ENCODE measurements at regions of chr16 and their contacts with region 1.

Region 1: DNA sequence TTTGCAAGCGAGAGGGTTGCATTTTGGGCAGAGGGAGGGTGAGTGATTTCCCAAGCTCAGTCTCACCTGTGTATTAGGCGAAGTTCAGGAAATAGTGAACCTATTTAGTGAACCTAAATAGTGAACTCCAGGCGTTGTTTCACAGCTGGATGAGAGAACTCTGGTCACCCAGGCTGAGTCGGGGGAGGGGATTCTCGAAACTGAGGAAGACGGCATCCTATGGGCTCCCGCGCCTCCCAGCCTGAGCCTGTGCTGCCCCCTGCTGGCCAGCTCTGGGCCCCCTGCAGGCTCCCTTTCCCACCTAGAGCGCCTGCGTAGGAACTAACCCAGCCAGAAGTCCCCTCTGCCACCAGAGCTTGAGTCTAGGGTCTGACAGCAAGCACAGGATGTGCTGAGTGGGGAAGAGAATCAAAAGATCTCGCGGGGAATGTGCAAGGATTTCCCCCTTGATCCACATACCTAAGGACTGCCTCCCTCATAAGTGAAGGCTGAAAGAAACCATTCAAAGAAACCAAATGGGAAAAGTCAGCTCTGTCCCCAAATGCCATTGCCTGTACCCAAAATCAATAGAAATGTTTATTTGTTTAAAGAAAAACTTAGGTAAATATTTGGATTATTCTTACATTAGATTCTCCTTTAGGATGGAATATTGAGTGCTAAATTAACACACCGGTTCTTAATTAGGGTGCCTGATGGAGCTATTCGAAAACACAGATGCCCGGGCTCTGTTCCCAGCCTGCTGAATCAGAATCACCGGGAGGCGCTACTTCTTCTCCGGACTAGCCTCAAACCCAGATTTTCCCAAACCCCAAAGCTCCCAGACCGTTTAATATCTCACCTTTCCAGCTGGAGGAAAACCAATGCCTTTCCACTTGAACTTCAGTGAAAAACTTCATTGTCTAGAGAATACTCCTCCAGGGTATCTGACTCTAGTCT is 14.8 kb upstream of the MARVELD3 start:
- DNase-seq: peak; percentile 72
- ATAC-seq: peak; percentile 96
- H3K4me3 ChIP-seq: peak overlapping the region in 1 of 3 experiments; percentile 23; a peak in 2 of 6 replicates
- H3K27ac ChIP-seq: no peak overlapping the region
- H3K4me1 ChIP-seq: peaks cover 70% of the 10 kb centered on the region
- H3K27me3 ChIP-seq: no peaks in the 10 kb centered on the region
- CTCF ChIP-seq: peak; percentile 100
- EP300 ChIP-seq: no peak
- POLR2A ChIP-seq: no peak
- RAD21 ChIP-seq: peak; percentile 100

Region 2: GRCh38 chr16:71383054-71383773 is 228.0 kb before region 1 on chr16:
- CTCF ChIA-PET with region 1: no interaction called
- POLR2A ChIA-PET with region 1: no interaction called
- in situ Hi-C with region 1: no loop called
- intact Hi-C with region 1: no loop called
- DNase-seq: no peak
- ATAC-seq: peak; percentile 53
- H3K4me3 ChIP-seq: no peak overlapping the region
- H3K27ac ChIP-seq: no peak overlapping the region
- H3K4me1 ChIP-seq: no peaks in the 10 kb centered on the region
- H3K27me3 ChIP-seq: peaks cover 0 to 44% of the 10 kb centered on the region in 2 experiments; a peak in 3 of 5 replicates
- CTCF ChIP-seq: no peak
- EP300 ChIP-seq: no peak
- POLR2A ChIP-seq: no peak
- RAD21 ChIP-seq: no peak

Region 3: GRCh38 chr16:71461686-71462648 is 149.2 kb before region 1 on chr16 and contains the start of gene ZNF23:
- CTCF ChIA-PET with region 1: no interaction called
- POLR2A ChIA-PET with region 1: interaction called, 12 read pairs
- in situ Hi-C with region 1: no loop called
- intact Hi-C with region 1: no loop called
- DNase-seq: peak; percentile 64
- ATAC-seq: peak; percentile 99
- H3K4me3 ChIP-seq: peak within 1 kb of the TSS; percentile 73 to 90 (median 89)
- H3K27ac ChIP-seq: peak within 1 kb of the TSS; percentile 64
- H3K4me1 ChIP-seq: peaks cover 25% of the 10 kb centered on the region
- H3K27me3 ChIP-seq: no peaks in the 10 kb centered on the region; a peak in 1 of 5 replicates
- CTCF ChIP-seq: peak; percentile 57
- EP300 ChIP-seq: 0 out of 4 replicates have a peak, but pooled peaks have one; percentile 24 to 56
- POLR2A ChIP-seq: peak; percentile 96 to 99
- RAD21 ChIP-seq: peak; percentile 71
- total RNA-seq, gene ZNF23: 12.2 and 14.0 TPM in 2 replicates

Region 4: GRCh38 chr16:71499775-71500364 is 111.3 kb before region 1 on chr16:
- CTCF ChIA-PET with region 1: interaction called, 10 read pairs
- POLR2A ChIA-PET with region 1: no interaction called
- in situ Hi-C with region 1: no loop called
- intact Hi-C with region 1: no loop called
- DNase-seq: peak; percentile 68
- ATAC-seq: peak; percentile 85
- H3K4me3 ChIP-seq: no peak overlapping the region
- H3K27ac ChIP-seq: no peak overlapping the region
- H3K4me1 ChIP-seq: no peaks in the 10 kb centered on the region
- H3K27me3 ChIP-seq: no peaks in the 10 kb centered on the region
- CTCF ChIP-seq: peak; percentile 90
- EP300 ChIP-seq: no peak
- POLR2A ChIP-seq: no peak
- RAD21 ChIP-seq: peak; percentile 84

Region 5: GRCh38 chr16:71564155-71564967 is 46.8 kb before region 1 on chr16:
- CTCF ChIA-PET with region 1: interaction called, 89 read pairs
- POLR2A ChIA-PET with region 1: interaction called, 142 read pairs
- in situ Hi-C with region 1: loop called (anchors 5 kb)
- intact Hi-C with region 1: loop called (anchors 1 kb)
- DNase-seq: no peak
- ATAC-seq: peak; percentile 26
- H3K4me3 ChIP-seq: peak overlapping the region; percentile 54 to 76 (median 69)
- H3K27ac ChIP-seq: peak overlapping the region; percentile 85
- H3K4me1 ChIP-seq: peaks cover 37% of the 10 kb centered on the region
- H3K27me3 ChIP-seq: no peaks in the 10 kb centered on the region; a peak in 1 of 5 replicates
- CTCF ChIP-seq: no peak
- EP300 ChIP-seq: no peak
- POLR2A ChIP-seq: no peak
- RAD21 ChIP-seq: no peak

Region 6: DNA sequence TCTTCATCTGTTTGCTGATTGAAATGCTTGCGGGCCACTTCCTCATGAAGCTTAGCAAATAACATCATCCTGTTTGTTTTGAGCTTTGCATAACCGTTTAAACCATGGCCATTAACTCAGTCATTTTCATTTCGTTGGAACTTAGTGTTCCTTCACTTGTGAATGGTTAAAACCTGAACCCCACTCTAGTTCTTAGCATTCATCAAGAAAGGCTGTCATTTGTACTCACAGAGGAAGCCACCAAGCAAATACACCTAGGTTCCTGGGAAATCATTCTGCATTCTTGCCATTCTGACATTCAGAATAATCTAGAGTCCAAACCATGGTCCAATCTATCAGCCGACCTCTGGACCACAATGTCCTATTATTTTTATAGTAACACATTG is 25.9 kb before region 1 on chr16:
- CTCF ChIA-PET with region 1: no interaction called
- POLR2A ChIA-PET with region 1: interaction called, 17 read pairs
- in situ Hi-C with region 1: no loop called
- intact Hi-C with region 1: no loop called
- DNase-seq: peak; percentile 83
- ATAC-seq: peak; percentile 58
- H3K4me3 ChIP-seq: peak overlapping the region in 2 of 3 experiments; percentile 25 to 35; a peak in 2 of 6 replicates
- H3K27ac ChIP-seq: peak overlapping the region; percentile 90
- H3K4me1 ChIP-seq: peaks cover 77% of the 10 kb centered on the region
- H3K27me3 ChIP-seq: no peaks in the 10 kb centered on the region
- CTCF ChIP-seq: no peak
- EP300 ChIP-seq: peak in 1 of 2 experiments; percentile 88; a peak in 2 of 4 replicates
- POLR2A ChIP-seq: 0 out of 4 replicates have a peak, but pooled peaks of 1 of the 2 experiments have one; percentile 18
- RAD21 ChIP-seq: no peak

Region 7: GRCh38 chr16:71600822-71601221 is 10.4 kb before region 1 on chr16:
- CTCF ChIA-PET with region 1: no interaction called
- POLR2A ChIA-PET with region 1: interaction called, 11 read pairs
- in situ Hi-C with region 1: no loop called
- intact Hi-C with region 1: no loop called
- DNase-seq: peak; percentile 50
- ATAC-seq: peak; percentile 99
- H3K4me3 ChIP-seq: peak overlapping the region in 1 of 3 experiments; percentile 54; a peak in 2 of 6 replicates
- H3K27ac ChIP-seq: peak overlapping the region; percentile 16
- H3K4me1 ChIP-seq: peaks cover 59% of the 10 kb centered on the region
- H3K27me3 ChIP-seq: no peaks in the 10 kb centered on the region
- CTCF ChIP-seq: peak; percentile 83
- EP300 ChIP-seq: no peak
- POLR2A ChIP-seq: no peak
- RAD21 ChIP-seq: peak; percentile 36; the same call in 1 of the 2 replicates

Measured in HepG2 (cell line).